Posterior cingulate gyrus (tissue), 11 donors: ENCODE measurements at regions of chr6 and their contacts with region 1.

Region 1: GRCh38 chr6:39361657-39362486 is 39.4 kb upstream of the KCNK16 start:
- DNase-seq: peak; percentile 49 to 96 (median 78)

Region 2: DNA sequence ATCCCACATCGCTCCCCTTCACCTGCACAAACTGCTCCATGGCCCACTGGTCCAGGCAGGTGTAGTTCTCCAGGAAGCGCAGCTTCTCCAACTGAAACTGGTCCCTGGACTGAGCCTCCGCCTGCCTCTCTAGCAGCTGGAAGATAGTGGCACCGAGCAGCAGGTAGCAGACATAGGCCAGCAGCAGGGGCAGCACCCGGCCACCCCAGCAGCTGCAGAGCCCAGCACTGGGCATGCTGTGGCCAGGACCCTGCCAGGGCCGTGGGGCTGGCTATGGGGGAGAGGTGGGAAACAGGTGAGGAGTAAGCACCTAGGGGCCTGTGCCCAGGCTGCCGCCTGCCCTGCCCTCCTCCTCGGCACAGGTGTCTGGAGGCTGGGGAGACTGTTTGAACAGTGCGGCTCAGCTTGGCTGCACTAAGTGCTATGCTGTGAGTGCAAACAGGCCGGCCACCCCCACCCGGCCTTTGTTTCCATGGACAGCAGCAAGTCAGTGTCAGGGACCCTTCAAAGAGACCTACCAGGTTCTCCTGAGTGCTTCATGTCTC is 39.5 kb before region 1 on chr6 and contains the start of gene KCNK16:
- intact Hi-C with region 1: no loop called
- DNase-seq: peak in 2 of 10 donors; percentile 5 to 67

Region 3: DNA sequence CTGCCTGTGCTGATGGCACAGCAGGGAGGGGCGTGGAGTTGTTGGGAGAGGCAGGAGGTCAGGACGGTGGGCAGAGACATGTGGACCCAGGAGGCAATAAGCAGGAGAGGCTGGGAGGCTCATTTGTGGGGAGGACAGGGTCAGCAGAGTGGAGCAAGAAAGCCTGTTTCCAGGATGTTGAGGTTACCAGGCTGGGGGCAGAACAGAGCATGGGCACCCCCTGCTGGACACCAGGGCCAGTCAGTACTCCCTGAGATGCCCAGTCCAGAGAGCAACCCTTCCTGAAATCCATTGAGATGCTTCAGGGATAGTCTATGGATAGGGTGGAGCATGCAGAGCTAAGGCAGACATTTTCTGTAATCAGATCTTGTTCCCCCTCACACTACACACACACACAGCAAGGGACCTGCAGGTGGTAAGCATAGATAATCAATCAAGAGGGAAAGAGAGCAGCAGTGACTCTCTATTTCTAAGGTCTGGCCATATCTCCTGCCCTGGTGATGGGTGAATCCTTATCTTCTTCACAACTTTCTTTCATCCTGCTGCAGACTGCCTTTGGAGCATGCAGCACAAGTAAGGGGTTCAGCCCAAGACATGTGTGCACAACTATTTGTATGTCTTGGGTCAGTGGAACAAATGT is 530.7 kb after region 1 on chr6:
- intact Hi-C with region 1: loop called (anchors 5 kb)
- DNase-seq: peak; percentile 47 to 96 (median 78)

Region 4: GRCh38 chr6:40308533-40309306 is 946.8 kb after region 1 on chr6:
- intact Hi-C with region 1: loop called (anchors 5 kb)
- DNase-seq: peak in 5 of 10 donors; percentile 57 to 89 (median 74)

Region 5: GRCh38 chr6:41027799-41028628 is 1666.1 kb after region 1 on chr6:
- intact Hi-C with region 1: loop called (anchors 5 kb)
- DNase-seq: peak; percentile 49 to 97 (median 83)

Region 6: GRCh38 chr6:41066867-41067304 is 1705.0 kb after region 1 on chr6:
- intact Hi-C with region 1: loop called (anchors 10 kb)
- DNase-seq: peak in 9 of 10 donors; percentile 39 to 90 (median 73)